Activated B cell treated with CpG ODN at 0.5 μM for 24 hours (primary cell): ENCODE measurements at regions of chr3 and their contacts with region 1.

Region 1: GRCh38 chr3:119819806-119820205 is 37.9 kb downstream of the NR1I2 start:
- DNase-seq: no peak
- ATAC-seq: no peak
- H3K4me3 Mint-ChIP-seq: no peak overlapping the region
- H3K27ac Mint-ChIP-seq: no peak overlapping the region
- H3K4me1 Mint-ChIP-seq: no peaks in the 10 kb centered on the region
- H3K27me3 Mint-ChIP-seq: no peaks in the 10 kb centered on the region
- CTCF ChIP-seq: no peak

Region 2: DNA sequence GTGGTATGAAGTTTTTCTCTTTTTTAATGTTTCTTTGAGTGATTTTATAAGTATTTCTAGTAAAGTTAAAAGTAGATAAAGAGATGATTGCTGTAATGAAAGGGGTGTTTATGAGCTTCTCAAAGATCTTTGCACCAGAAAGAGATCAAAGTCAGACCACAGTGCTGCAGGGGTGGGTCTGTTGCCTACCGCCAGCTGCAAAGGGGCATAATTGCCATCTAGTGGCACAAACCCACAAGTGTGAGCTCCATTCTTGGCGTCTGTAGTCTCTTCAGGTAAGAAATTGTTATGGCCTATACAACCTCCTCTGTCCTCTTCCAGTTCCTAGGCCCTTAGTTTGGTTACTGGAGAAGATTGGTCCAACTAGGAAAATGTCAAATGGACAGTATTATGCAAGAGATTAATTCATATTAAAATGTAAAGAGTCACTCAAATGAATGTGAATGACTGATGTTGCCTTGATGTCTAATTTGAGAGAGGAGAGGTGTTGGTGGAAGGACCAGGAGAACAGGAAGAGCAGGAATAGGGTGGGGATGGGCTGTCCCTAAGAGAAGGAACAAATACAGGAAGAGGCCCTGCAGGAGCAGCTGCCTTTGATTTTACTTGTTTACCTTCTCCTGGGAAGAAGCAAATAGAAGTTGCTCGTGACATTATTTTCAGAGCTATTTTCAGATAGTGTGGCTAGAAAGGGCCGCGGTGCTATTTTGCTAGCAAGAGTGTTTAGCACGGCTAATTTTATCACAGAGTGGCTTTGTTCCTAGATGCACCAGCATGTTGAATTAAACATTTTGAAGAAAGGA is 327.5 kb after region 1 on chr3:
- CTCF ChIA-PET with region 1: interaction called, 10 read pairs
- POLR2A ChIA-PET with region 1: no interaction called
- intact Hi-C with region 1: loop called (anchors 1 kb)
- DNase-seq: no peak
- ATAC-seq: peak; percentile 56
- H3K4me3 Mint-ChIP-seq: no peak overlapping the region
- H3K27ac Mint-ChIP-seq: no peak overlapping the region
- H3K4me1 Mint-ChIP-seq: no peaks in the 10 kb centered on the region
- H3K27me3 Mint-ChIP-seq: no peaks in the 10 kb centered on the region
- CTCF ChIP-seq: no peak

Region 3: GRCh38 chr3:120182724-120183524 is 363.1 kb after region 1 on chr3:
- CTCF ChIA-PET with region 1: no interaction called
- POLR2A ChIA-PET with region 1: no interaction called
- intact Hi-C with region 1: loop called (anchors 1 kb)
- DNase-seq: no peak
- ATAC-seq: no peak
- H3K4me3 Mint-ChIP-seq: no peak overlapping the region
- H3K27ac Mint-ChIP-seq: no peak overlapping the region
- H3K4me1 Mint-ChIP-seq: no peaks in the 10 kb centered on the region
- H3K27me3 Mint-ChIP-seq: no peaks in the 10 kb centered on the region
- CTCF ChIP-seq: no peak

Region 4: GRCh38 chr3:120198305-120198878 is 378.6 kb after region 1 on chr3:
- CTCF ChIA-PET with region 1: no interaction called
- POLR2A ChIA-PET with region 1: no interaction called
- intact Hi-C with region 1: loop called (anchors 1 kb)
- DNase-seq: no peak
- ATAC-seq: no peak
- H3K4me3 Mint-ChIP-seq: no peak overlapping the region
- H3K27ac Mint-ChIP-seq: no peak overlapping the region
- H3K4me1 Mint-ChIP-seq: no peaks in the 10 kb centered on the region
- H3K27me3 Mint-ChIP-seq: no peaks in the 10 kb centered on the region
- CTCF ChIP-seq: no peak

Region 5: GRCh38 chr3:120417272-120417911 is 597.6 kb after region 1 on chr3:
- CTCF ChIA-PET with region 1: no interaction called
- POLR2A ChIA-PET with region 1: no interaction called
- intact Hi-C with region 1: loop called (anchors 1 kb)
- DNase-seq: peak; percentile 61
- ATAC-seq: peak; percentile 100
- H3K4me3 Mint-ChIP-seq: peak overlapping the region; percentile 83
- H3K27ac Mint-ChIP-seq: peak overlapping the region; percentile 37
- H3K4me1 Mint-ChIP-seq: peaks cover 16% of the 10 kb centered on the region
- H3K27me3 Mint-ChIP-seq: no peaks in the 10 kb centered on the region
- CTCF ChIP-seq: no peak